ENCODE measurements at regions of chr17 and their contacts with region 1.

Region 1: GRCh38 chr17:15502369-15503112 is 35.1 kb upstream of the CDRT4 start:
- DNase-seq: peak; percentile 94
- ATAC-seq: peak; percentile 94
- H3K4me3 Mint-ChIP-seq: peak overlapping the region; percentile 63
- H3K27ac Mint-ChIP-seq: peak overlapping the region; percentile 58; the same call in 1 of the 2 replicates
- H3K4me1 Mint-ChIP-seq: peaks cover 20% of the 10 kb centered on the region
- H3K27me3 Mint-ChIP-seq: no peaks in the 10 kb centered on the region
- CTCF ChIP-seq: peak; percentile 72; the same call in 1 of the 2 replicates

Region 2: DNA sequence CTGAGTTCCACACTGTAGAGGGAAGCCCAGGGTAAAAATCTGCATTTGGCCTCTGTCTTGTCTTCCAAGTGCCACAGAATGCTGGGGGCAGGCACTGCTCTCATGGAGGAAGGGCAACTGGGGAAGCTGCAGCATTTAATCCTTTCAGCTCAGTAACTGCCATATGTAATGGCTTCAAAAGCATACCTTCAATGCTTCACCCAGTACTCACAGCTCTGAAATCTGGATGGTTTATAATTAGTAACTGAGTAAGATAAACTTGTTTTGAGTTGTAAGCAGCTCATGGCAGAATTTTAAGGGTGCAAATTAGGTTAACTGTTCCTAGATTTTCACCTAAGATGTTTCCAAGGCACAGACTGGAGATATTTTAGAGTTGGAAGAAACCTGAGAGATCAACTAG is 261.9 kb before region 1 on chr17:
- CTCF ChIA-PET with region 1: interaction called, 18 read pairs
- POLR2A ChIA-PET with region 1: interaction called, 5 read pairs
- DNase-seq: no peak
- ATAC-seq: no peak
- H3K4me3 Mint-ChIP-seq: no peak overlapping the region
- H3K27ac Mint-ChIP-seq: no peak overlapping the region
- H3K4me1 Mint-ChIP-seq: peaks cover 5% of the 10 kb centered on the region
- H3K27me3 Mint-ChIP-seq: no peaks in the 10 kb centered on the region; the same call in 1 of the 2 replicates
- CTCF ChIP-seq: no peak

Region 3: GRCh38 chr17:15262291-15263205 is 240.0 kb before region 1 on chr17:
- CTCF ChIA-PET with region 1: interaction called, 148 read pairs
- POLR2A ChIA-PET with region 1: no interaction called
- DNase-seq: peak; percentile 57
- ATAC-seq: peak; percentile 38
- H3K4me3 Mint-ChIP-seq: peak overlapping the region; percentile 86
- H3K27ac Mint-ChIP-seq: no peak overlapping the region
- H3K4me1 Mint-ChIP-seq: peaks cover 20% of the 10 kb centered on the region
- H3K27me3 Mint-ChIP-seq: peaks cover 90% of the 10 kb centered on the region
- CTCF ChIP-seq: no peak

Region 4: DNA sequence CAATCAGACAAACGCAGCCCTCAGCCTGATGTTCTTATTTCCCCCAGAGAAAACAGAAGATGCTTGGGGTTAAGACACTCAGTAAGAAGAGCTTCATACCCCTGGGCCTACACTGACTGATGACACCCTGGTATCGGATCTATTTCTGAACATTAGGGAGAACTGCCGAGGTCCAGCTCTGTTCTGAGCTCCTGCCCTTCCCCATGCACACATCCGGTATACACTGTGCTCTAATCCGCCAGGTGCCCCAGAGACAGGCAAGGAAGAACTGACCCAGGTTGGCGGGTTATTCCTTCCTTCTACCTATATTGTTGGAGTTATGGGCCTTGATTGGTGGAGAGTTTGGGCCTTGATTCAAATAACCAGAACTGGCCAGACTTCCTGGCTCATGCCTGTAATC is 103.1 kb before region 1 on chr17:
- CTCF ChIA-PET with region 1: no interaction called
- POLR2A ChIA-PET with region 1: no interaction called
- DNase-seq: no peak
- ATAC-seq: no peak
- H3K4me3 Mint-ChIP-seq: no peak overlapping the region
- H3K27ac Mint-ChIP-seq: no peak overlapping the region
- H3K4me1 Mint-ChIP-seq: no peaks in the 10 kb centered on the region
- H3K27me3 Mint-ChIP-seq: no peaks in the 10 kb centered on the region
- CTCF ChIP-seq: no peak

Region 5: GRCh38 chr17:15436473-15437302 is 65.9 kb before region 1 on chr17:
- CTCF ChIA-PET with region 1: interaction called, 29 read pairs
- POLR2A ChIA-PET with region 1: no interaction called
- DNase-seq: peak; percentile 59
- ATAC-seq: peak; percentile 77
- H3K4me3 Mint-ChIP-seq: no peak overlapping the region
- H3K27ac Mint-ChIP-seq: no peak overlapping the region
- H3K4me1 Mint-ChIP-seq: peaks cover 6% of the 10 kb centered on the region; the same call in 1 of the 2 replicates
- H3K27me3 Mint-ChIP-seq: no peaks in the 10 kb centered on the region
- CTCF ChIP-seq: peak; percentile 28; the same call in 1 of the 2 replicates

Region 6: GRCh38 chr17:15483431-15483830 is 19.1 kb before region 1 on chr17:
- CTCF ChIA-PET with region 1: interaction called, 20 read pairs
- POLR2A ChIA-PET with region 1: interaction called, 3 read pairs
- DNase-seq: no peak
- ATAC-seq: no peak
- H3K4me3 Mint-ChIP-seq: no peak overlapping the region
- H3K27ac Mint-ChIP-seq: no peak overlapping the region
- H3K4me1 Mint-ChIP-seq: peaks cover 23% of the 10 kb centered on the region
- H3K27me3 Mint-ChIP-seq: no peaks in the 10 kb centered on the region
- CTCF ChIP-seq: no peak

Measured in WTC11 (cell line).